ENCODE measurements at regions of chr9 and their contacts with region 1.

Region 1: GRCh38 chr9:4339357-4339756 is 39.5 kb upstream of the GLIS3 start:
- DNase-seq: peak; percentile 75 to 96 (median 88)
- ATAC-seq: peak; percentile 80
- H3K4me3 ChIP-seq: no peak overlapping the region
- H3K4me1 ChIP-seq: peaks cover 5% of the 10 kb centered on the region
- CTCF ChIP-seq: peak; percentile 81

Region 2: GRCh38 chr9:3732077-3733038 is 607.0 kb before region 1 on chr9:
- intact Hi-C with region 1: loop called in 1 of 2 experiments (anchors 10 kb)
- DNase-seq: peak in 1 of 3 donors; percentile 84
- ATAC-seq: peak; percentile 99
- H3K4me3 ChIP-seq: no peak overlapping the region
- H3K4me1 ChIP-seq: no peaks in the 10 kb centered on the region
- CTCF ChIP-seq: peak; percentile 40

Region 3: DNA sequence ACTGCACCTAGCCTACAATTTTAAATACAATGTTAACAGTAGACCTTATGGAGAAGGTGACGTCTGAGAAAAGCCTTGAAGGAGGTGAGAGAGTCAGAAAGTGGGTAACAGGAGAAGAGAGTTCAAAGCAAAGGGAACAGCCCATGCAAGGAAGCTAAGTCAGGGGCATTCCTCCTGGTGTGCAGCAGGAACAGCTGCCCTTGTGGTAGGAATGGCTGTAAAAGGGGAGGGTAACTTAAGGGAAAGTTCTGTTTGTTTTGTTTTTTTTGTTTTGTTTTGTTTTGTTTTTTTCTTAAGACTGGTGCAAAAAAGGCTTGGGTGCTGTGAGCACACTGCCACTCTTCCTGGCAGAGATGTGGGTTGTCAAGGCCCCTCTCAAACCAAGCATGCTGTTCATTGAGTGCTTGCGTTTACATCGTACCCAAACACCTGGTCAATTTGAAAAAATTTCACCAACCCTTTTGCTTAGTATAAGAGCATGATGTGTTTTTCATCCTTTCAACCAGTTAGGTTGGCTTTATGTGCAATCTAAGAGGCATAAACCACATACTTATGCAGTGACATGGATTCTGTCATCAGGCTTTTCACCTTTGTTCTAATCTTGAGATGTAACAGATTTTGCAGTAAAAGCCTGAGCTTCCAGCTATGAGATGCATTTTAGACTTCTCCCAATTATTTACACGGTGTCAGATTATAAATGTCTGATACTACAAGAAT is 319.2 kb before region 1 on chr9:
- intact Hi-C with region 1: no loop called
- DNase-seq: no peak
- ATAC-seq: no peak
- H3K4me3 ChIP-seq: no peak overlapping the region
- H3K4me1 ChIP-seq: peaks cover 13% of the 10 kb centered on the region
- CTCF ChIP-seq: no peak